ENCODE measurements at regions of chr4 and their contacts with region 1.

Region 1: DNA sequence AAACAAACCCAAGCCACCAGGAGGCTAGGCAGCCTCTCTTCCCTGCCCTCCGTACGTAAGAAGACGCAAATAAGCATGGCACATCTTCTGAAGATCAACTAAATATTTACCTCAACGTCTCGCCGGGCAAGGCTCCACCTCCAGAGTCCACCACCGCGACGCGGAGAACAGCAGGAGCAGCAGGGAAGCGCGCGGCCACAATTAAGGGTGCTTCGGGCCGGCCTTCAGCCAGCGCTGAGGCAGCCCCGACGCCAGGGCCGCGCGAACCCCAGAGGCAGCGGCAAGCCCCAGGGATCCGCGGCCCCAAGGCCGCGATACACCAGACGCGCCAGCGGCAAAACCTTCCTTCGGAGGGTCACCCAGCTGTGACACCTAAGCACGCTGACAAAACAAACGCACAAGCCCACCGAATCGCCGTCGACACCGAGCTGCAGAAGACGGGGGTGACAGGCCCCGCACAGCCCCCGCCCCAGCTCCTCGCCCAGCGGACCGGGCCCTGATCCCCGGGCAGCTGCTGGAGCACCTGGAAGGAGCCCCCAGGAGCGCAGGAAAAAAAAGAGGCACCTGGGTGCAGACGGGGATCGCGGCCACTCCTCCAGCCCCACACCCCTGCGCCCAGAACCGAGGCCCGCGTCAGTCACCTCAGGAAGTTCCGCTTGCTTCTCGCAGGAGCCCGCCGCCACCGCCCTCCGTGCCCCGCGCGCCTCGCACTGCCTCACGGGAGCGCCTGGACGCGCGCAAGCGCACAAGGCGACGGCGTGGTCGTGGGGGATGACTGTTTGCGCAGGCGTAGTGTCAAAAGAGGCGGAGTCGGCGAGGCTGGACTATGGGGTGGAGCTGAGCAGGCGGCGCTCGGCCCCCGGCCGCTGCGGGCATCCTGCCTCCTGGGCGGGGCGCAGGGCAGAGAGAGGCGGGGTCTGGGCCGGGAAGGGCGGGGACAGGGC is at the starts of genes HAUS3 and POLN:
- DNase-seq: peak; percentile 98 to 99 (median 99)
- ATAC-seq: peak; percentile 94
- H3K4me3 ChIP-seq: peak within 1 kb of the TSS; percentile 79
- H3K27ac ChIP-seq: peak within 1 kb of the TSS; percentile 70
- H3K4me1 ChIP-seq: peaks cover 18 to 36% of the 10 kb centered on the region in 2 experiments
- H3K27me3 ChIP-seq: no peaks in the 10 kb centered on the region
- CTCF ChIP-seq: no peak
- EP300 ChIP-seq: no peak
- POLR2A ChIP-seq: peak; percentile 80
- RAD21 ChIP-seq: no peak
- polyA plus RNA-seq, gene HAUS3: 8.9 to 9.6 TPM
- polyA plus RNA-seq, gene POLN: 0.08 to 0.25 TPM

Region 2: GRCh38 chr4:2441393-2442174 is 199.9 kb after region 1 on chr4:
- CTCF ChIA-PET with region 1: no interaction called
- POLR2A ChIA-PET with region 1: no interaction called
- in situ Hi-C with region 1: no loop called
- intact Hi-C with region 1: loop called (anchors 1 kb)
- DNase-seq: peak; percentile 94 to 96 (median 95)
- ATAC-seq: peak; percentile 99
- H3K4me3 ChIP-seq: no peak overlapping the region; the same call in 1 of the 2 replicates
- H3K27ac ChIP-seq: no peak overlapping the region
- H3K4me1 ChIP-seq: peaks cover 4 to 44% of the 10 kb centered on the region in 2 experiments; a peak in 4 of 5 replicates
- H3K27me3 ChIP-seq: no peaks in the 10 kb centered on the region
- CTCF ChIP-seq: peak; percentile 99 to 100 (median 99)
- EP300 ChIP-seq: no peak
- POLR2A ChIP-seq: no peak
- RAD21 ChIP-seq: peak; percentile 86 to 98